ENCODE measurements at regions of chr2 and their contacts with region 1.

Region 1: DNA sequence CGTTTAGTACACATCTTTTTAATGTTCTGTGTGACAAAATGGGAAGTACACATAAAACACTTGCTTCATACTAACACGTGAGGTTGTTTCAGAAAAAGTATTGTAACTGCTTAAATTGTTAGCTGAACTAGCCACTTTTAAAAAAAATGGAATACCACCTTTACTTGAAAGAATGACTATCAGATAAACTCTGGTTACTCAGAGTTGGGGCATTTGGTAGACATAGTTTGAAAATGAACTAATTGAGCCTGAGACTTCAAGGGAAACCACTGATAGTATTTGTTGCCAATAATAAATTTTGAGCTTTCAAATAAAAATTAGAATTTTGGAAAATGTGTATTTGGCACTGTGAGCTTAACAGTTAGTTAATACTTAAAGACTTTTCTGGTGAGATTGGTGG is 103.0 kb upstream of the FBXO11 start:
- DNase-seq: no peak
- H3K4me3 ChIP-seq: no peak overlapping the region
- H3K27ac ChIP-seq: no peak overlapping the region
- H3K4me1 ChIP-seq: no peaks in the 10 kb centered on the region
- H3K27me3 ChIP-seq: no peaks in the 10 kb centered on the region
- CTCF ChIP-seq: no peak
- POLR2A ChIP-seq: no peak

Region 2: GRCh38 chr2:48707470-48707869 is 698.2 kb after region 1 on chr2:
- intact Hi-C with region 1: loop called (anchors 10 kb)
- DNase-seq: no peak
- H3K4me3 ChIP-seq: no peak overlapping the region
- H3K27ac ChIP-seq: no peak overlapping the region
- H3K4me1 ChIP-seq: no peaks in the 10 kb centered on the region
- H3K27me3 ChIP-seq: no peaks in the 10 kb centered on the region
- CTCF ChIP-seq: no peak
- POLR2A ChIP-seq: no peak

Measured in breast epithelium (tissue), 4 donors.